Naive thymus-derived CD4-positive, alpha-beta T cell (primary cell): ENCODE measurements at regions of chr5 and their contacts with region 1.

Region 1: DNA sequence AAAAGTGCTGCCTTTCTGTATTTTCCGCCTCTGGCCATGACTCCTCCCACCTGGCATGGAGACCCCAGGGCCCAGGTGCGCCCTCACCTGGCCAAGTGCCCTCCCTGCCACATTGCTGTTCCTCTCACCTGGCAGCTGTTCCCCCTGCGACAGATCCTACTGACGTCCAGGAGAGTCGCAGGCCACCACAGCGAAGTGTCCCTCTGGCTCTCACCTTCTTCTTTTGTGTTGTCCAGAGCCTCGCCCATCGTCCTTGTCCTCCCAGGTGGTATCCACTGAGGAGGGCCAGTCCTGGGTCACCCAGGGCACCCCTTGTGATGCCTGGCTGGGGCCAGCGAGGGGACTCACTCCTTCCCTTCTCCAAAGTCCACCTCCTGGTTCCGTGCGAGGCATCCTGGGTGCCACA is 2.6 kb downstream of the NKD2 start:
- DNase-seq: peak in 7 of 9 donors; percentile 31 to 55 (median 46)
- ATAC-seq: peak; percentile 40
- H3K4me3 ChIP-seq: no peak overlapping the region
- H3K4me3 Mint-ChIP-seq: peak overlapping the region in 8 of 10 donors; percentile 1 to 68 (median 48)
- H3K27ac ChIP-seq: no peak overlapping the region
- H3K27ac Mint-ChIP-seq: peak overlapping the region in 1 of 9 donors; percentile 66
- H3K4me1 ChIP-seq: peaks cover 0 to 10% of the 10 kb centered on the region in 2 donors
- H3K4me1 Mint-ChIP-seq: peaks cover 7 to 24% (median 11%) of the 10 kb centered on the region in 7 donors
- H3K27me3 ChIP-seq: peaks cover 0 to 9% of the 10 kb centered on the region in 2 donors
- H3K27me3 Mint-ChIP-seq: peaks cover 30 to 41% (median 38%) of the 10 kb centered on the region in 5 donors

Region 2: DNA sequence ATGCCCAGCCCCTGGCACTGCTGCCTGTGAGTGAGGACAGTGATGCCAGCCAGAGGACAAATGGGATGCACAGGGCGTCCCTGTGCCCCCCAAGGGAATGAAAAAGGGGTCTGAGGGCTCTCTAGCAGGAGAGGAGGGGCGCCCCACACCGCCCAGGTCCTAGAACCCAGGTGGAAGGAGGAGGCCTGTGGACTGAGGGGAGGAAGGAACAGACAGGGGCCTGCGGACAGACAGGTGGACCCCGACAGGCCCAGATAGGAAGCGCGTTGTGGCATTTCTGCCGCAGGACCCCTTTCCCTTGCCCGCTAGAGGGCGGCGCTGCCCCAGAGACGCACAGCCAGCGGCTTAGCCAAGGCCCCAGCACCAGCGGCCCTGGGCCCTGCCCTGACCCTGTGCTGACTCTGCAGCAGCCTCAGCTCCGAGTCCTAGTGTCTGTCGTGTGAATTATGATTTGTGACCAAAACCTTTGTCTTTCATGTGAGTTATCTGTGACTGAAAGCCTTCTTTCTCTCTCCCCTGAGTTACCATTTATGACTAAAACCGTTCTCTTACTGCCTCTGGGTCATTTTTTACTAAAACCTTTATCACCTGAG is 87.9 kb before region 1 on chr5:
- CTCF ChIA-PET with region 1: interaction called, 4 read pairs
- POLR2A ChIA-PET with region 1: no interaction called
- intact Hi-C with region 1: loop called (anchors 1 kb)
- DNase-seq: peak; percentile 41 to 79 (median 64)
- ATAC-seq: peak; percentile 87
- H3K4me3 ChIP-seq: no peak overlapping the region
- H3K4me3 Mint-ChIP-seq: no peak overlapping the region
- H3K27ac ChIP-seq: no peak overlapping the region
- H3K27ac Mint-ChIP-seq: no peak overlapping the region
- H3K4me1 ChIP-seq: no peaks in the 10 kb centered on the region
- H3K4me1 Mint-ChIP-seq: peaks cover 6 to 15% (median 11%) of the 10 kb centered on the region in 7 donors
- H3K27me3 ChIP-seq: no peaks in the 10 kb centered on the region
- H3K27me3 Mint-ChIP-seq: peaks cover 21 to 43% (median 33%) of the 10 kb centered on the region in 5 donors

Region 3: DNA sequence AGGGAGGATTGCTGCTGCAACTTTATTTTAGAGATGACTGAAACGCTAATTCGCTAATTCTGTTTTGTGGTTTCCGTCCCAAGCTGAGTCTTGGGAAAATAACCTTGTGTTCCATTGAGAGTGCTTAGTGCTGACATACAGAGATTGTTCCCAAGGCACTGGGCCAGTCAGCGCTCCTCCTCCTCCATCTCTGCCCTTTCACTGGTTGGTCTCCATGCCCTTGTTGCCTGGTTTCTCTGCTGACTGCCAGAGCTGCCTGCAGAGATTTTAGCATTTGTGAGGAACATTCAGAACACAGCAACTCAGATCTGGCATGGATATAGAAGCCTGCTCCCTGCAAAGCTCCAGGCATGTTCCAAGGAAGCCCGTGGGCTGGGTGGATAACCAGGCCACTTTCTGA is 1866.3 kb after region 1 on chr5:
- CTCF ChIA-PET with region 1: no interaction called
- POLR2A ChIA-PET with region 1: no interaction called
- intact Hi-C with region 1: no loop called
- DNase-seq: no peak
- ATAC-seq: no peak
- H3K4me3 ChIP-seq: no peak overlapping the region
- H3K4me3 Mint-ChIP-seq: no peak overlapping the region
- H3K27ac ChIP-seq: no peak overlapping the region
- H3K27ac Mint-ChIP-seq: no peak overlapping the region
- H3K4me1 ChIP-seq: no peaks in the 10 kb centered on the region
- H3K4me1 Mint-ChIP-seq: no peaks in the 10 kb centered on the region
- H3K27me3 ChIP-seq: no peaks in the 10 kb centered on the region
- H3K27me3 Mint-ChIP-seq: no peaks in the 10 kb centered on the region